AG04450 (cell line): ENCODE measurements at regions of chr7 and their contacts with region 1.

Region 1: DNA sequence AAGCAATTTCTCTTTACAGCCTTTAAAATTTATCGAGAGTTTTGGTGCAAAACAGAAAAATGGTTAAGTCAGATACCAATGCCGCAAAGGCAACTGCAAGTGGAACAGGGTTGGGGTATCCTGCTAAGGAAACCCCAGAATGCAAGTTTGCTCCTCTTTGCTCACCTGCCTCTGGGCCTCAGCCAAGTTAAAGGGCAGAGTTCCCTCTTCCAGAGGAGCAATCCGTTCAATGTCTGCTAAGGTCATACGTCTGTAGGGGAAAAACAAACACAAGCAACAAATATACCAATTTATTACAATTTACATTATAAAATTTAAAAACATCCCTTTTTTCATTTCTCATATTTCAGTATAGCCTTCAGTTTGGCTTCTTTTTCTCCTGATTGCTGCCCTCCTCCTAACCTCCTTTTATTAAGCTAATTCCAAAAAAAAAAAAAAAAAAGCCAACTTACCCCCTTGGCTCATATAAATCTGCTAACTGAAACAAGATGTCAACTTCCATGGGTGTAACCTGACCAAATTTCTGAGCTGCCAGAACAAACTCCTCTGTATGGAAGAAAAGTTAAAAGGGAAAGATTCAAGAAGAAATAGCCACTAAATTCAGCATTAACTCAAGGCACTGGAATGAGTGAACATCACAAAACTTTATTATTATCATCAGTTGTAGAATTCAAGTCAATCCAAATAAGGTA is 132.6 kb downstream of the SLC25A13 start:
- DNase-seq: no peak
- H3K4me3 ChIP-seq: no peak overlapping the region
- H3K27ac ChIP-seq: no peak overlapping the region
- H3K27me3 ChIP-seq: no peaks in the 10 kb centered on the region
- CTCF ChIP-seq: no peak

Region 2: DNA sequence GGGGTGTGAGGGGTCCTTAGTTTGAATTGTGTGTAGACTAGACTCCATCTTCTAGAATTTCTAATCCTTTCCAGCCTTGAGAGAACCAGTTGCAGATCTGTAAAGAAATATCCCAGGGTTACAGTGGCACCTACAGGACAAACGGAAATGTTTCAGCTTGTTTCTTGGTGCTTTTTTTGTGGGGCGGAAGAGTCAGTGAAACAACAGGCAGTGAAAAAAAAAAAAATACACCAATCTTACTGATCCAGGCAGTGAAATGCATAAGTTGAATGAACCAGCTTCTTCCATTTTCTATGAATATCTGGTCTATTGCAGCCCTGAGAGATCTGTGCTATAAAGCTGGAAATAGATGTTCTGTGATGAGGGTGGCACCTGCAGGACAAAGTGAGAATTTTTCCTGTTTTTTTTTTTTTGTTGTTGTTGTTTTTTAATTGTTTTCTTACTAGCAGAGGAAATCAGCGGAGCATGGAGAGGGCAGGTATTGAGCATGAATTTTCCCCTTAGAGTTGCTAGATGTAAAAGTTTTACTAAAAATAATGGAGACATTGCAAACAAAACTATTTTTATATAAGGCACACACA is 498.8 kb before region 1 on chr7:
- CTCF ChIA-PET with region 1: no interaction called
- POLR2A ChIA-PET with region 1: no interaction called
- DNase-seq: peak; percentile 10
- H3K4me3 ChIP-seq: no peak overlapping the region
- H3K27ac ChIP-seq: no peak overlapping the region
- H3K27me3 ChIP-seq: no peaks in the 10 kb centered on the region
- CTCF ChIP-seq: peak; percentile 58

Region 3: DNA sequence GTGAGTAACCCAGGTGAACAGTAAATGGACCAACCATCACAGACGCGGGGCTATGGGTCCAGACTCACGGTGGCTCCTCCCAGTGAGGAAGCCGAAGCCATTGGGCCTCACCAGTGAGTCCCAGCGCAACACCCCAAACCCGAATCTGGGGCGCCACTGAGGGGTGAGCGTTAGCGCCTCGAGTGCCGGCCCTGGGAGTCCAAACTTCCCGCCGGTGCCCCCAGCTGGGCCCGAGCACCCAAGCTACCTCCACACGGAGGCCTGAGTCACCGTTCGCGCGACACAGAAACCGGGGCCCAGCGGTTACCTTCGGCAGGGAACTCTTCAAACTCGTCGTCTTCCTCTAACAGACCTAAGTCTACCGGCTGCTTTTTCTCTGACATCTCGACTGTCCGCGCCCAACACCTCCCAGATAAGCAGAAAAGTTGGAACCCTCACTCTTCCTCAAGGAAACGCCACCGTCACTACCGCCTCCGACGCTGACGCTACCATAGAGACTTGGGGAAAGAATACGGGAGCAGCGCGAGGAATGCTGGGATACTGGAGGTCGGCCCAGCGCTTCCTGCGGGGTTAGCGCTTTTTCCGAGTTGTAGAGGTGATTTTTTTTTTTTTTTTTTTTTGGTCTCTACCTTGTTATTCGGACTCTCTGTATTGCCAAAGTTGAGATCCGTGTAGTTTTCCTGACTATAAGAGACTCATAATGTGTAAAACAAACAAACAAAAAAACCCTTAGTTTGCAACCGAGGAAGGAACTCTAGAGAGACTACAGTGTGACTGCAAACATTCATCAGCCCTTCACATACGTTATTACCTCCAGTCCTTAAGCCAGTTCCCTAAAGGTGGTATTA is 520.3 kb after region 1 on chr7 and contains the start of gene SEM1:
- CTCF ChIA-PET with region 1: interaction called, 13 read pairs
- POLR2A ChIA-PET with region 1: no interaction called
- DNase-seq: peak; percentile 51
- H3K4me3 ChIP-seq: peak within 1 kb of the TSS; percentile 90
- H3K27ac ChIP-seq: peak within 1 kb of the TSS; percentile 90
- H3K27me3 ChIP-seq: no peaks in the 10 kb centered on the region
- CTCF ChIP-seq: no peak
- polyA plus RNA-seq, gene SEM1: 121 and 153 TPM in 2 replicates